CD4-positive, alpha-beta memory T cell (primary cell): ENCODE measurements at regions of chr10 and their contacts with region 1.

Region 1: DNA sequence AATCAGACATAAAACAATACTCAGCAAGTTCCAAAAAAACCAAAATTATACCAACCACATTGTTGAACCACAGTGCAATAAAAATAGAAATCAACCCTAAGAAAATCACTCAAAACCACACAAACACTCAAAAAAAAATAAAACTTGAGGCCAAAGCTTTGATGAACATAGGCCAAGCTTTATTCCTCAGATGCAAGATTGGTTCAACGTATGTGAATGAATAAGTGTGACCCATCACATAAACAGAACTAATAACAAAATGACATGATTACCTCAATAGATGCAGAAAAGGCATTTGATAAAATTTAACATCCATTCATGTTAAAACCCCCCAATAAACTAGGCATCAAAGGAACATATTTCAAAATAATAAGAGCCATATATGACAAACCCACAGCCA is 506.1 kb upstream of the FZD8 start:
- DNase-seq: no peak
- H3K4me3 ChIP-seq: no peak overlapping the region
- H3K4me3 Mint-ChIP-seq: no peak overlapping the region
- H3K27ac ChIP-seq: no peak overlapping the region
- H3K27ac Mint-ChIP-seq: no peak overlapping the region
- H3K4me1 ChIP-seq: no peaks in the 10 kb centered on the region
- H3K4me1 Mint-ChIP-seq: no peaks in the 10 kb centered on the region
- H3K27me3 ChIP-seq: no peaks in the 10 kb centered on the region
- H3K27me3 Mint-ChIP-seq: no peaks in the 10 kb centered on the region

Region 2: DNA sequence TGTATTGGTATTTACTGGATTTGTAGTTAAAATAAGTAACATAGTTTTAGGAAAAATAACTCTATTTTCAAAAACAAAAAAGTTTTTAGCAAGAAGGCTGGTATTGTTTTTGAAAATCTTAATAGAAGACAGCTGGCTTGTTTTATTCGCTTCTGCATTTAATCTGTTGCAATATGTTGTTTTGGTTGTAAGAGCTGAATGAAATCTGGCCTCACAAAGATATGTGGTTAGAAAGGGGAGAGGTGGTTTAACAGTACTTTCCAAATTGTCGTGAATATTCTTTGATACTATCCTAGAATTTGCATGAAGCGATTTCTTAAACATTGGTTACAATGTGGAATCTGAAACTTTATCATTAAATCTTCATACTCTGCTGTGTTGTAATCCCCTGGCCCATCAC is 150.2 kb before region 1 on chr10:
- CTCF ChIA-PET with region 1: no interaction called
- POLR2A ChIA-PET with region 1: no interaction called
- intact Hi-C with region 1: no loop called
- DNase-seq: no peak
- H3K4me3 ChIP-seq: no peak overlapping the region
- H3K4me3 Mint-ChIP-seq: no peak overlapping the region
- H3K27ac ChIP-seq: no peak overlapping the region
- H3K27ac Mint-ChIP-seq: no peak overlapping the region
- H3K4me1 ChIP-seq: no peaks in the 10 kb centered on the region
- H3K4me1 Mint-ChIP-seq: no peaks in the 10 kb centered on the region
- H3K27me3 ChIP-seq: no peaks in the 10 kb centered on the region
- H3K27me3 Mint-ChIP-seq: no peaks in the 10 kb centered on the region

Region 3: GRCh38 chr10:36171953-36172940 is 24.0 kb after region 1 on chr10:
- CTCF ChIA-PET with region 1: no interaction called
- POLR2A ChIA-PET with region 1: no interaction called
- intact Hi-C with region 1: loop called (anchors 2 kb)
- DNase-seq: no peak
- H3K4me3 ChIP-seq: no peak overlapping the region
- H3K4me3 Mint-ChIP-seq: no peak overlapping the region
- H3K27ac ChIP-seq: no peak overlapping the region
- H3K27ac Mint-ChIP-seq: no peak overlapping the region
- H3K4me1 ChIP-seq: no peaks in the 10 kb centered on the region
- H3K4me1 Mint-ChIP-seq: no peaks in the 10 kb centered on the region
- H3K27me3 ChIP-seq: no peaks in the 10 kb centered on the region
- H3K27me3 Mint-ChIP-seq: no peaks in the 10 kb centered on the region